ENCODE measurements at regions of chr2 and their contacts with region 1.

Region 1: GRCh38 chr2:161954103-161954502 is 119.9 kb downstream of the DPP4 start:
- DNase-seq: peak; percentile 18
- H3K4me3 Mint-ChIP-seq: no peak overlapping the region
- H3K27ac Mint-ChIP-seq: peak overlapping the region; percentile 88
- H3K4me1 Mint-ChIP-seq: peaks cover 53% of the 10 kb centered on the region
- H3K27me3 Mint-ChIP-seq: no peaks in the 10 kb centered on the region

Region 2: DNA sequence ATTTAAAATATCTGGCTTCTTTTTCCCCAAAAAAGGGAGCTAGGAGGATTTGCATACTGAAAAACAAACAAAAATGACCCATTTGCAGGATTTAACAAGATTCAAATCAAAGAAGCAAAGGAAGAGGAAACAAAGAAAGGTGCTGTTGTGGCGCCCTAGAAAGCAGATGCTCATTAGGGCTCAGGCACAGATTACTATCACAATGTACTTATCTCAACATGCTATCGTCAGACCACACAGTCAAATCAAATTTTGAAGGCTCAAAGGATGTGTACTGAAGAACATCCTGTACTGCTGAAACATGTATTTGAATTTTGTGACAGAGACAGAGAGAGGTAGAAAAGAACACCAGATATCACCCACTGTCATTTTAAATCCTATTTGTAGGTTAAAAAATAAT is 1471.4 kb before region 1 on chr2:
- CTCF ChIA-PET with region 1: no interaction called
- intact Hi-C with region 1: loop called (anchors 10 kb)
- DNase-seq: peak; percentile 46
- H3K4me3 Mint-ChIP-seq: peak overlapping the region; percentile 47
- H3K27ac Mint-ChIP-seq: peak overlapping the region; percentile 85
- H3K4me1 Mint-ChIP-seq: peaks cover 71% of the 10 kb centered on the region
- H3K27me3 Mint-ChIP-seq: no peaks in the 10 kb centered on the region

Region 3: DNA sequence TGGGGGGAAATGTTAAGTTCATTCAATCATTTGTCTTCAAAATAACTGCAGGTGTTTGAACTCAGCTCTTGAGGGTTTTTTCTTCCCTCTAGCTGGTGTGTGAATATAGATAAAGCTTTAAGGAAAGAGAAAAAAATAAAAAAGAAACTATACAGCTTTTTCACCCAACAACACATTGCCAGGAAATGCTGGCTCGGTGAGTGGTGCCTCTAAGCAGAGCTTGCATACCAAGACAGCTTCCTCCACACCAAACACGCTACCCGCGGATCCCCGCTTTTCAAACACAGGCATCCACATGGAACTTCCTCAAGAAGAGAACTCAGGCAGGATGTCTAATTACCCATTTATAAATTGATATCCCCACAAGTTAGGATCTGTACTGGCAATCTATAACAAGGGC is 863.7 kb before region 1 on chr2:
- CTCF ChIA-PET with region 1: no interaction called
- intact Hi-C with region 1: no loop called
- DNase-seq: peak; percentile 74
- H3K4me3 Mint-ChIP-seq: no peak overlapping the region
- H3K27ac Mint-ChIP-seq: peak overlapping the region; percentile 68
- H3K4me1 Mint-ChIP-seq: peaks cover 33% of the 10 kb centered on the region
- H3K27me3 Mint-ChIP-seq: no peaks in the 10 kb centered on the region

Region 4: GRCh38 chr2:161308178-161308955 is 645.7 kb before region 1 on chr2 and contains the start of gene PSMD14:
- CTCF ChIA-PET with region 1: no interaction called
- intact Hi-C with region 1: loop called (anchors 2 kb)
- DNase-seq: peak; percentile 96
- H3K4me3 Mint-ChIP-seq: peak within 1 kb of the TSS; percentile 86
- H3K27ac Mint-ChIP-seq: peak within 1 kb of the TSS; percentile 91
- H3K4me1 Mint-ChIP-seq: peaks cover 35% of the 10 kb centered on the region
- H3K27me3 Mint-ChIP-seq: no peaks in the 10 kb centered on the region
- total RNA-seq, gene PSMD14: 76.2 to 79.4 TPM

Region 5: DNA sequence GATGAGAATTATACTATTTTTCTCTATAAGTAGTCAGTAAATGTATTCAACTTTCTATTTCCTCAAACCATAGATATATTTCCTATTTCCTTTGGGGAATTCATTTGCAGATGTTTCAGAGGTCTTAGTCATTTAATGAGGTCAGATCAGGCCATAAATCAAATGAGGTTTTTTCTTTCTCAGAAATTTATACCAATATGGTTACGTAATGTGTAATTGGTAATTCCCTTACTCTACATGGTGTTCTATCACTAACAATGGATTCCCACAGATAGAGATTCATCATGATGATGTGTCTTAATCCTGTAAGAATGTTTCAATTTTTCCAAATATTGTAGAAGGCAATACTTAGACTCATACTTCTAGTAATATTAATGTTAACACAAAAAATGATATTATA is 11.9 kb after region 1 on chr2:
- CTCF ChIA-PET with region 1: interaction called, 3 read pairs
- intact Hi-C with region 1: loop called (anchors 1 kb)
- DNase-seq: no peak
- H3K4me3 Mint-ChIP-seq: no peak overlapping the region
- H3K27ac Mint-ChIP-seq: no peak overlapping the region
- H3K4me1 Mint-ChIP-seq: peaks cover 28% of the 10 kb centered on the region
- H3K27me3 Mint-ChIP-seq: no peaks in the 10 kb centered on the region

Region 6: DNA sequence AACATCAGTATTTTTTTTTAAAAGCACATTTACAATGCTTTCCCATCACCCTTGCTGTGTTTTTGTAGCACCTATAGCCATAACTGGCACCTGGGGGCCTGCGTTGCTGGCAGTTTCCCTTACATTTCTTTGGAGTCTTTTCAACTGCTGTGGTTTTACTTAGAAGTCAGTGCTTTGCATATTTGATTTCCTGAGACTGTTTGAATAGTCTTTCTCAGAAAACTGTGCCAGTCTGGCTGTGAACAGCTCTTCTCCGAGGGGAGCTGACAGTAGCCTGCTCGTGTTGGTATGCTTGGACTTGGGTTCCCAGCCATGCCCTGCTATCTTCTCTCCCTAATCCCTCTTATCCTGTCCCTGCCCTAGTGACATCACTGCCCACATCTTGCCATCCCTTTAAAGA is 38.4 kb after region 1 on chr2:
- CTCF ChIA-PET with region 1: interaction called, 7 read pairs
- intact Hi-C with region 1: loop called (anchors 1 kb)
- DNase-seq: peak; percentile 80
- H3K4me3 Mint-ChIP-seq: peak overlapping the region; percentile 78
- H3K27ac Mint-ChIP-seq: peak overlapping the region; percentile 97
- H3K4me1 Mint-ChIP-seq: peaks cover 49% of the 10 kb centered on the region
- H3K27me3 Mint-ChIP-seq: no peaks in the 10 kb centered on the region

Region 7: GRCh38 chr2:162058973-162059668 is 105.0 kb after region 1 on chr2:
- CTCF ChIA-PET with region 1: no interaction called
- intact Hi-C with region 1: loop called (anchors 1 kb)
- DNase-seq: peak; percentile 57
- H3K4me3 Mint-ChIP-seq: peak overlapping the region; percentile 44
- H3K27ac Mint-ChIP-seq: peak overlapping the region; percentile 89
- H3K4me1 Mint-ChIP-seq: peaks cover 88% of the 10 kb centered on the region
- H3K27me3 Mint-ChIP-seq: no peaks in the 10 kb centered on the region

Measured in activated naive CD4-positive, alpha-beta T cell treated with anti-CD3 and anti-CD28 coated beads for 36 hours (primary cell).